HCT116 (cell line): ENCODE measurements at regions of chr12 and their contacts with region 1.

Region 1: DNA sequence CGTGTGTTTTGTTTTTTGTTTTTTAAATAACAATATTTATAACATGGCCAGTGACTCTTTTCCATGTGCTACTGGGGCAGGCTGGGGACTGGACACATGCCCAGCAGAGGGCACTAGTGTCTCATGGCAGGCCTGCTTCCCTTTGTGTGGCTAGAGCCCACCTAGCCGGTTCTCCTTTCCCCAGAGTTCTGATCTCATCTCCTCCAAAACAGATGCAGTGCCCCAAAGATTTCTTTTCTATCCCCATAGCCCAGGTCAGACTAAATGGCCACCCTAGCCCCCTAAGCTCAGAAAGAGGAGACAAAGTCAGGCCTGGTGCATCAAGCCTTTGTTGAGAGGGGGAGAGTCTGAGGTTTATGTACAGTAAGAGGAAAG is 21.2 kb downstream of the PRPF40B start:
- DNase-seq: peak; percentile 21
- ATAC-seq: peak; percentile 87
- H3K4me3 ChIP-seq: no peak overlapping the region
- H3K27ac ChIP-seq: no peak overlapping the region
- H3K4me1 ChIP-seq: peaks cover 0 to 4% of the 10 kb centered on the region in 2 experiments; a peak in 2 of 4 replicates
- H3K27me3 ChIP-seq: no peaks in the 10 kb centered on the region
- CTCF ChIP-seq: peak; percentile 89 to 96 (median 90)
- POLR2A ChIP-seq: no peak
- RAD21 ChIP-seq: peak; percentile 95

Region 2: DNA sequence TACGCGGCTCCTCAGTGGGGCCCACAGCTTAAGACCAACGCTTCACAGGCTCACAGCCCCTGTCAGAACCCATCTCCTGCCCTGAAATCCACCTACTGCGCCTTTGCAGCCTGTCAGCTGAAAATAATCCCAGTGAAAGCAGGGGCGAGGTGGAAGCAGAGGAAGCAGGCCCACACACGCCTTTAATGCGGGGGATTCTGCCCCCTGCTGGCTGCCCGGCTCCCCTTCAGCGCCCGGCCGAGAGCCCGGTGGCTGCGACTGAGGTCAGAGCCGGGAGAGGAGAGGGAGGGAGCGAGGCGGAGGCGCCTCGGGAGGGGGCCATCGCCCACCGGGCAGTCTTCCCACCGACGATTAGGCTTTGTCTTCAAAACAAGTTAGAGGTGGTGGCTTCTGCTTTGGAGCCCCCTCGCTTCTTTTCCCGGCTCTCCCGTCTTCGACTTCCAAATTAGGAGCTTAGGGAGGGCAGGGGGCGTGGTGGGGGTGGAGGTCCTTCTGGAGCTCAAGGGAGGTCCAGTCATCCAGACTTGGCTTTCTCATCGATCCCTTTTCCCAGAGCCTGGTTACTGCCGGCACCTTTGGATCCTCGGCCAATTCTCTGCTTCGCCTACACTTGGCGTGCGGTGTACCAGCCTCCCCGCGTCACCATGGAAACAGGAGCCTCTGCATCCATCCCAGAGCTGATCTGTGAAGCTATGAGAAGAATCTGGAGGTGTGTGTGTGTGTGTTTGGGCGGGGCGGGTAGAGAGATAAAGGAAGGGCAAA is 753.8 kb before region 1 on chr12:
- CTCF ChIA-PET with region 1: no interaction called
- POLR2A ChIA-PET with region 1: no interaction called
- RAD21 ChIA-PET with region 1: no interaction called
- intact Hi-C with region 1: no loop called
- DNase-seq: peak; percentile 27
- ATAC-seq: peak; percentile 97
- H3K4me3 ChIP-seq: no peak overlapping the region
- H3K27ac ChIP-seq: no peak overlapping the region
- H3K4me1 ChIP-seq: peaks cover 0 to 12% of the 10 kb centered on the region in 2 experiments; a peak in 2 of 4 replicates
- H3K27me3 ChIP-seq: peaks cover 3% of the 10 kb centered on the region; the same call in 1 of the 2 replicates
- CTCF ChIP-seq: peak; percentile 90 to 93 (median 92)
- POLR2A ChIP-seq: no peak
- RAD21 ChIP-seq: peak; percentile 84

Region 3: DNA sequence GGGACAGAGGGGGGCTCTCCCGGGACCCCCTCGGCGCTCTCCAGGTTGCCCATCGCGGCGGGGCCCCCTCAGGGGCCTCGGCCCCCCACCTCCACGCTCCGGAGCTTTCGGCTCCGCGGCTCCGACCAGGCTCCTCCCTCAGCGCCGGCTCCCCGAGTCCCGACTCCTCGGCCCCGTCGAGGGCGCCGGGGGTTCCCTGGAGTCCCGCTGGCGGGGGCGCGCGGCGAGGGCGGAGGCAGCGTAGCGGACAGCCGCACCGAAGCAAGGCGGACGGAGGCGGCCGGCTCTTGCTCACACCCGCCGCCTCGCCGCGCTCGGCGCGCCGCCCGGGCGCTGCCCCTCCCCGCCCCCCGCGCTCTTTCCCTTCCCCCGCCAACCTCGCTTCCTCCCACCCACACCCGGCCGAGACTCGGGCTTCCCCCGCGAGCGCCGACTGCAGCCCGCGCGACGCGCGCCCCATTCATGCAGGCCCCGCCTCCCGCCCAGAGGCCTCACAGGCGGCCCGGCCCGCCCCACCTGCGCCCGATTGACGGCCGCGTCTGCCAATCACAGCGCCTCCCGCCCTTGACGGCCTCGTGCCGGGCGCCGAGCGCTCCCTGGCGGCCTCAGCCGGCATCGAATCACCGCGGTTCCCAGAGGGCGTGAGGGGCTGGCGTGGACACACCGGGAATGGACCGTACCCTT is 62.7 kb after region 1 on chr12 and contains the start of gene FMNL3:
- CTCF ChIA-PET with region 1: no interaction called
- POLR2A ChIA-PET with region 1: no interaction called
- RAD21 ChIA-PET with region 1: no interaction called
- intact Hi-C with region 1: loop called (anchors 1 kb)
- DNase-seq: peak; percentile 79
- ATAC-seq: peak; percentile 98
- H3K4me3 ChIP-seq: peak within 1 kb of the TSS; percentile 45 to 56
- H3K27ac ChIP-seq: no peak within 1 kb of the TSS; the same call in 1 of the 2 replicates
- H3K4me1 ChIP-seq: peaks cover 0 to 26% of the 10 kb centered on the region in 2 experiments
- H3K27me3 ChIP-seq: peaks cover 31% of the 10 kb centered on the region; the same call in 1 of the 2 replicates
- CTCF ChIP-seq: peak; percentile 90 to 96 (median 90)
- POLR2A ChIP-seq: no peak
- RAD21 ChIP-seq: peak; percentile 91
- total RNA-seq, gene FMNL3: 3.5 TPM

Region 4: DNA sequence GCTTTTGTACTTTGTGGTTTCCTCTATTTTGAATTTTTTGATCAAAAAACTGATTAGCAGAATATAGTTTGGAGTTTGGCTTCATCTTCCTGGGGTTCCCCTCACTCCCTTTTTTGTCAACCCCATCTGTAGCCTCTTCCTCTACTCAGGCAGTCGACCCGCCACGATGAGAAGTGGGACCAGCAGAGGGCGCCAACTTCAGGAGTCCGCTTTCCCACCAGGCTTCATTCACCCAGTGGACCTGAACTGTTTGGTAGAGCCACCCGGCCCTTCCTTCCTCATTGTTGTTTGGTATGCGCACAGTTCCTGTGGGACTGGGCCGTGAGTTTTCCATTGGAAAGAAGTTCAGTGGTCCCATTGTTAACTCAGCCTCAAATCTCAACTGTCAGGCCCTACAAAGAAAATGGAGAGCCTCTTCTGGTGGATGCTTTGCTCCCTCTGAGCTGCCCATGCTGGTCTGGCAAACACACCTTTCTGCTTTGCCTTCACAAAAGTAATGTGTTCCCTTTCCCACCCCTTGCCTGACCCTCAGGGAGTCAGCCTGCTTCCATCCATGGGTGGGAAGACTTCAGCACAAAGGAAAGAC is 118.5 kb after region 1 on chr12:
- CTCF ChIA-PET with region 1: no interaction called
- POLR2A ChIA-PET with region 1: no interaction called
- RAD21 ChIA-PET with region 1: no interaction called
- intact Hi-C with region 1: loop called (anchors 1 kb)
- DNase-seq: no peak
- ATAC-seq: peak; percentile 90
- H3K4me3 ChIP-seq: no peak overlapping the region
- H3K27ac ChIP-seq: no peak overlapping the region
- H3K4me1 ChIP-seq: no peaks in the 10 kb centered on the region
- H3K27me3 ChIP-seq: no peaks in the 10 kb centered on the region
- CTCF ChIP-seq: peak; percentile 46 to 83 (median 75); a peak in 5 of 6 replicates
- POLR2A ChIP-seq: no peak
- RAD21 ChIP-seq: peak; percentile 17; the same call in 1 of the 2 replicates

Region 5: DNA sequence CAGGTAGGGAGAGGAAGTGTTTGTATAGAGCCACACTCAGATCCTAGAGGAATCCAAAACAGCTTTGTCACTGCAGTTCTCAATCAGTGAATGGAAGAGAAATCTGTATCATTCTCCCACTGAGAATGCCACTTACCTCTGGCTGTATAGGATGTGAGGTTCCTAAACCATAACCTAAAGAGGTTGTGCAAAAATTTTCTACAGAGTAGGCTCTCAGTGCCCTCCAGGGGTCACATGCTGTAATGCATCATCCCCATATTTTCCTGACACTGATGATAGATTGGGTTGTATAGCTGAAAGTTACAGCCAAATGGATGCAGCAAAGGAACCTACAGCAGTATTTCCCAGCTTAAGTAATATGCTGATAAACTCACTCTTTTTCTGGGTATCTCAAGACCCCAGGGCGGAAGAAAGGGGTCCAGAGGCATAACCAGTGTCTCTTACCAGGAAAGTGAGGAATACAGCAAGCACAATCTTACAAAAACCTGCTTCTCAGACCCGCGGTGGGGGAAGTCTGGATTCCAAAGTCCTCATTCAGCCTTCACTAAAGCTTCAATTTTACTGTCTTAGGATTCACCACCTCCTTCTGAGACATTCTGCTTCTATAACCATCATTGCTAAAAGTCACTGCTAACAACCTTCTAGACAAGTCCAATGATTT is 194.5 kb after region 1 on chr12:
- CTCF ChIA-PET with region 1: interaction called, 3 read pairs
- POLR2A ChIA-PET with region 1: no interaction called
- RAD21 ChIA-PET with region 1: no interaction called
- intact Hi-C with region 1: loop called (anchors 10 kb)
- DNase-seq: peak; percentile 22
- ATAC-seq: peak; percentile 30; the same call in 1 of the 2 replicates
- H3K4me3 ChIP-seq: no peak overlapping the region
- H3K27ac ChIP-seq: no peak overlapping the region
- H3K4me1 ChIP-seq: peaks cover 12 to 19% of the 10 kb centered on the region in 2 experiments; a peak in 3 of 4 replicates
- H3K27me3 ChIP-seq: no peaks in the 10 kb centered on the region
- CTCF ChIP-seq: peak; percentile 61 to 84 (median 66); a peak in 5 of 6 replicates
- POLR2A ChIP-seq: no peak
- RAD21 ChIP-seq: peak; percentile 85

Region 6: DNA sequence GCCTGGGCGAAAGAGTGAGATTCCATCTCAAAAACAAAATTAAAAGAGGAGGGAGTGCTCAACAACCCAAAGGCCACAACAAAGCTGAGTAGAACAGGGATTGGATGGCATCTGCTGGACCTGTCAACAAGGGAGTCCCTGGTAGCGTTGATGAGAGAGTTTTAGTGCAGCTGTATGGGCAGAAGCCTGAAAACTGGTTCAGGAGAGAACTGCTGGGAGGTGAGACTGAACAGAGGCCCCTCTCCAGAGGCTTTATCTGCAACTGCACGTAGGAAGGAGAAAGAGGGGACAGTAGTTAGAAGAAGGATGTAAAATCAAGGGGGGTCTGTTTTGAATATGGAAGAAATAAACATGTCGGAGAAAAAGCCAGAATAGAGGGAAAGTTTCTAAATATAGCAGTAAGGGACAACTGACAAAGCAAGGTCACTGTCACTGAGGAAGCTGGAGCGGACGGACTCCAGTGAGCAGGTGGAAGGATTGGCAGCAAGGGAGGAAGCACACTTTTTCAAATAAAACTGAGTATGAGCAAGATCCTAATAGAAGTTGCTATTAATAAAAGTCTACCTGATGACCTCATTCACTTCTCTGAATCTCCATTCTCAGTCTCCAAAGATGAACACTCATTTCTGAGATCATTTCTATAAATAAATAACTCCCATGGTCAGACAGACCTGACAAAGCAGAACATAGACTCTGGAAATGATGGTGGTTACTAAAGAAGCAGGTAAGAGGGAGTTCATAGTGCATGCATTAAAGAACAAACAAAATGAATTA is 1107.5 kb after region 1 on chr12:
- CTCF ChIA-PET with region 1: no interaction called
- POLR2A ChIA-PET with region 1: no interaction called
- RAD21 ChIA-PET with region 1: no interaction called
- intact Hi-C with region 1: no loop called
- DNase-seq: no peak
- ATAC-seq: no peak
- H3K4me3 ChIP-seq: no peak overlapping the region
- H3K27ac ChIP-seq: no peak overlapping the region
- H3K4me1 ChIP-seq: no peaks in the 10 kb centered on the region
- H3K27me3 ChIP-seq: no peaks in the 10 kb centered on the region
- CTCF ChIP-seq: no peak
- POLR2A ChIP-seq: no peak
- RAD21 ChIP-seq: no peak